PC-3 (cell line): ENCODE measurements at regions of chr15 and their contacts with region 1.

Region 1: GRCh38 chr15:99981191-99981647 is 248.0 kb upstream of the LYSMD4 start:
- DNase-seq: peak; percentile 56
- ATAC-seq: peak; percentile 45
- H3K4me3 ChIP-seq: no peak overlapping the region
- H3K27ac ChIP-seq: no peak overlapping the region
- H3K4me1 ChIP-seq: peaks cover 7% of the 10 kb centered on the region; the same call in 1 of the 2 replicates
- H3K27me3 ChIP-seq: no peaks in the 10 kb centered on the region
- CTCF ChIP-seq: peak; percentile 60

Region 2: DNA sequence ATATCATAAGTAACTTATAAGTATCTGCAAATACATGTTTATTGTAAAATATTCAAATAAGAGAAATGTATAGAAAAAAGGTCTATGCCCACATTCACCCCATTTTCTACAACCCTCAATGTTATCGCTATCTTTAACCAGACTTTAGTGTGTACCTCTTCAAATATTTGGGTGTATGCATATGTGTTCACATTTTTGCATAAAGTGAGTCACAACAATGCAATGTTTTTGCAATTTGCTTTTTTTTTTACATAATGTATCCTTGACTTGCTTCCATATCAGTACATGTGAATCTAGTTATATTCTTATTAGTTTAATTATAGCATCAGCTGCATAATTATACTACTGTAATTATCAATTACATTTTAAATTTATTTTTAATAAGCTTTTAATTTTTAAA is 130.7 kb before region 1 on chr15:
- CTCF ChIA-PET with region 1: no interaction called
- POLR2A ChIA-PET with region 1: no interaction called
- intact Hi-C with region 1: no loop called
- DNase-seq: no peak
- ATAC-seq: no peak
- H3K4me3 ChIP-seq: no peak overlapping the region
- H3K27ac ChIP-seq: no peak overlapping the region
- H3K4me1 ChIP-seq: no peaks in the 10 kb centered on the region
- H3K27me3 ChIP-seq: peaks cover 70% of the 10 kb centered on the region
- CTCF ChIP-seq: no peak

Region 3: GRCh38 chr15:100078511-100079220 is 97.4 kb after region 1 on chr15:
- CTCF ChIA-PET with region 1: no interaction called
- POLR2A ChIA-PET with region 1: interaction called, 12 read pairs
- intact Hi-C with region 1: no loop called
- DNase-seq: peak; percentile 81
- ATAC-seq: peak; percentile 97
- H3K4me3 ChIP-seq: peak overlapping the region; percentile 15; the same call in 1 of the 2 replicates
- H3K27ac ChIP-seq: peak overlapping the region; percentile 60
- H3K4me1 ChIP-seq: peaks cover 17% of the 10 kb centered on the region
- H3K27me3 ChIP-seq: no peaks in the 10 kb centered on the region
- CTCF ChIP-seq: 0 out of 2 replicates have a peak, but pooled peaks have one; percentile 9